ENCODE measurements at regions of chr9 and their contacts with region 1.

Region 1: GRCh38 chr9:127199001-127199791 is 65.4 kb upstream of the GARNL3 start:
- DNase-seq: peak; percentile 80
- H3K4me3 Mint-ChIP-seq: no peak overlapping the region
- H3K27ac Mint-ChIP-seq: no peak overlapping the region
- H3K4me1 Mint-ChIP-seq: peaks cover 5% of the 10 kb centered on the region
- H3K27me3 Mint-ChIP-seq: no peaks in the 10 kb centered on the region

Region 2: GRCh38 chr9:126939821-126940221 is 259.4 kb before region 1 on chr9:
- CTCF ChIA-PET with region 1: interaction called, 28 read pairs
- POLR2A ChIA-PET with region 1: interaction called, 5 read pairs
- DNase-seq: no peak
- H3K4me3 Mint-ChIP-seq: no peak overlapping the region
- H3K27ac Mint-ChIP-seq: no peak overlapping the region
- H3K4me1 Mint-ChIP-seq: peaks cover 5% of the 10 kb centered on the region
- H3K27me3 Mint-ChIP-seq: peaks cover 22% of the 10 kb centered on the region

Region 3: GRCh38 chr9:127263664-127264063 is 64.5 kb after region 1 on chr9:
- CTCF ChIA-PET with region 1: no interaction called
- POLR2A ChIA-PET with region 1: no interaction called
- DNase-seq: no peak
- H3K4me3 Mint-ChIP-seq: no peak overlapping the region
- H3K27ac Mint-ChIP-seq: no peak overlapping the region
- H3K4me1 Mint-ChIP-seq: no peaks in the 10 kb centered on the region
- H3K27me3 Mint-ChIP-seq: peaks cover 12% of the 10 kb centered on the region

Measured in activated CD4-positive, alpha-beta T cell treated with anti-CD3 and anti-CD28 coated beads, Interleukin-2, amount 10 ng/mL, durations not matched to agents 7 days and 5 days (primary cell).